ENCODE measurements at regions of chr16 and their contacts with region 1.

Region 1: DNA sequence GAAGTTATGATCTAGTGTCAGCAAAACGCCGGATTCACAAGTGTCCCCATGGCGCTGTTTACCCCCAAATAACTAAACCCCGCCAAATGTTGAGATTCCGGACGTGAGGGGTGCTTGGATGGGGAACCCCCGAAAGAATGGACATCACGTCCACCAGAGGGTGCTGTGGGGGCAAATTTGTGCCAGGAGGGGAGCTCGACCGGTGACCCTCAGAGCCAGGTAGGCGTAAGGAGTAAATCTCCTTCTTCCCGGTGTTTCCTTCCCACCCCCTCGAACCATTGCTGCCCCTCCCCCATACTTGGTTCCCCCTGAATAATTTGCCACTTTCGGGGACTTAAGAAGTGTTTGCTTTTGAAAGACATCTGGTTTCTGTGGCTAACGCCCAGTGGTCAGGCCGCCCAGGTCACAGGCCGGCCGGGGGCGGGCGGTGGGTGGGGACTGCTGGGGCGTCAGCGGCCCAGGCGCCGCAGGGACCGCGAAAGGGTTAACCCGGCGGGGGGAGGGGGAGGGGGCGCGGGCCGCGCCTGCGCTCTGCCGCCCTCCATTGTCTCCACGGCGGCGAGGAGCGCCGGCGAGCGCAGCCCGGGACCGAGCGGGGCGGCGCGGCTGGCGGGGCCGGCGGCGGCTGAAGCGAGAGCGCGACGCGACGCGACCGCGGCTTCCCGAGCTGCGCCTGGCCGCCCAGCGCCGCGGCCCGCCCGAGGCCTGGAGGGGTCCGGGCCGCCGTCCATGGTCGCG is at the start of gene ZNRF1:
- DNase-seq: peak in 1 of 2 donors; percentile 90
- H3K4me3 ChIP-seq: peak within 1 kb of the TSS; percentile 96 to 97
- H3K27ac ChIP-seq: peak within 1 kb of the TSS; percentile 62 to 74
- H3K4me1 ChIP-seq: peaks cover 0 to 16% of the 10 kb centered on the region in 2 donors
- H3K27me3 ChIP-seq: no peaks in the 10 kb centered on the region
- CTCF ChIP-seq: peak; percentile 76 to 86 (median 77)
- total RNA-seq, gene ZNRF1: 53.7 TPM

Region 2: GRCh38 chr16:74936902-74937560 is 61.6 kb before region 1 on chr16:
- intact Hi-C with region 1: no loop called
- DNase-seq: no peak
- H3K4me3 ChIP-seq: no peak overlapping the region
- H3K27ac ChIP-seq: no peak overlapping the region
- H3K4me1 ChIP-seq: no peaks in the 10 kb centered on the region
- H3K27me3 ChIP-seq: no peaks in the 10 kb centered on the region
- CTCF ChIP-seq: no peak

Region 3: GRCh38 chr16:74984535-74985296 is 13.9 kb before region 1 on chr16 and contains the start of gene WDR59:
- intact Hi-C with region 1: loop called (anchors 1 kb)
- DNase-seq: peak; percentile 100
- H3K4me3 ChIP-seq: peak within 1 kb of the TSS; percentile 81 to 83
- H3K27ac ChIP-seq: peak within 1 kb of the TSS; percentile 58 to 73
- H3K4me1 ChIP-seq: peaks cover 0 to 9% of the 10 kb centered on the region in 2 donors
- H3K27me3 ChIP-seq: no peaks in the 10 kb centered on the region
- CTCF ChIP-seq: no peak
- total RNA-seq, gene WDR59: 22.0 TPM

Region 4: GRCh38 chr16:75011634-75012307 is 13.1 kb after region 1 on chr16:
- intact Hi-C with region 1: loop called (anchors 2 kb)
- DNase-seq: peak in 1 of 2 donors; percentile 81
- H3K4me3 ChIP-seq: peak overlapping the region in 1 of 2 donors; percentile 30
- H3K27ac ChIP-seq: peak overlapping the region; percentile 86 to 88
- H3K4me1 ChIP-seq: peaks cover 4 to 23% of the 10 kb centered on the region in 2 donors
- H3K27me3 ChIP-seq: no peaks in the 10 kb centered on the region
- CTCF ChIP-seq: no peak

Region 5: GRCh38 chr16:75025761-75026160 is 27.1 kb after region 1 on chr16:
- intact Hi-C with region 1: loop called (anchors 1 kb)
- DNase-seq: no peak
- H3K4me3 ChIP-seq: no peak overlapping the region
- H3K27ac ChIP-seq: peak overlapping the region; percentile 85 to 87
- H3K4me1 ChIP-seq: peaks cover 4 to 13% of the 10 kb centered on the region in 2 donors
- H3K27me3 ChIP-seq: no peaks in the 10 kb centered on the region
- CTCF ChIP-seq: no peak

Region 6: DNA sequence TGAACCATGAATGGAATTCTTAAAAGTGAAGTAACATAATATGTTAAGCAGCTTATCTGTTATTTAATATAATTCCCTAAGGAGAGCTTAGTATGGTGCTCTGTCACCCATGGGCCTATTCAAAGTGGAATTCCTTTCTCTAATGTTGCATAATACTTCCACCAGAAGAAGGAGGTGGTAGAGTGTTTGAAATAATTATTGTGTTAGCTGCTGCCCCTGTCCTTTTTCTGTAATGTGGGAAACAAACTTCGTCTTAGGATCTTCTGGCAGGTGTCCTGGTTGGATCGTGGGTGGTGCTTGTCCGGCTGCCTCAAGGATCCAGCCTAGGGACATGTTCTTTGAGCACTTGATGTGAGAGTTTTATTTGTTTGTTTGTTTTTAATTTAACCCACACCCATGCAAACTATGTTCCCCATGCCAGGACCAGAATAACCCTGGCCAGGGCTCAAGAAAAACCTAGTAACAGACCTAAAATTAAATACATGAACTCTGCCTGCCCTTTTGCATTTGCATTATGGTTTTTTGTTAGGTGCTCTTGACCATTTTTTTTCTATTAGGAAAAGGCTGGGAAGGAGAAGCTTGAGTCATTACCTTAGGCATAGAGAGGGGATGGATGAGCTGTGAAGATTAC is 46.3 kb after region 1 on chr16:
- intact Hi-C with region 1: loop called (anchors 2 kb)
- DNase-seq: peak in 1 of 2 donors; percentile 85
- H3K4me3 ChIP-seq: no peak overlapping the region
- H3K27ac ChIP-seq: peak overlapping the region; percentile 54 to 72
- H3K4me1 ChIP-seq: peaks cover 13 to 31% of the 10 kb centered on the region in 2 donors
- H3K27me3 ChIP-seq: no peaks in the 10 kb centered on the region
- CTCF ChIP-seq: no peak

Region 7: DNA sequence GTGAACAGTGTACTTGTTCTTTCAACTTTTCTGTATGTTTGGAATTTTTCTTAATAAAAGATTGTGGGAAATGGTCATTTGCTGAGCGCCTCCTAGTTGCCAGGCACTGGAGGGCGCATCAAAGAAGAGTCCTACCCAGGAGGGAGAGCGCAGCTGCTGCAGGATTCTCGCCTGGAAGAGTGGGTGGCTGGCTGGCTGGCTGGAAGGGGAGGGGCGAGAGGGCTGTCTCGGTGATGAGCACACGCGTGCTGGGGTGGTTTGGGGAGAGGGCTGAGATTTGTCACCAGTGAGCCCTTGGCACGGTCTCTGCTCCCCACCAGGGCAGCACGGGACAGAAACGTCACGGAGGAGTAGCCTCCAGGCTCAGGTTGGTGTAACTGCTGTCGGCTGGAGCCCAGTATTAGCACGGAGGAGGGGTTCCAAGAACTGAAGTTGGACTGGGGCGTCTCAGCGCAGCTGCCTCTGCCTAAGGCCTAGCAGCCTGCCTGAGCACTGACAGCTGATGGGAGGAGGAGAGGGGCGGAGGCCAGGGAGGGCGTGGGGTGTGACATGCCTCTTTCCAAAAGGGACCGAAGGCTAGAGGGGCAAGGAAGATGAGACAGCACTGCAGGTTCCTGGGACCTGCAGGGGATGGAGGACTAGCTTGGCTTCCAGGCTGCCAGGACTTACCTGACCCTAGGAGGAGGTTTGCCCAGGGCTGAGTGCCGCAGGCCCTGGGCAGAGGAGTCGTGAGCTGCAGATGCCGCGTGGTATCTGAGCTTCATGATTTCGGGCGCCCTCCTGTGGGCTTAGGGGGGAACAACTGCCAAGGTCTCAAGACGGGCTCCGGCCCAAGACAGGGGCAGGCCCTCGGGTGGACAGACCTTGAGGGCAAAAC is 112.2 kb after region 1 on chr16:
- intact Hi-C with region 1: loop called (anchors 1 kb)
- DNase-seq: peak; percentile 69 to 95
- H3K4me3 ChIP-seq: peak overlapping the region in 1 of 2 donors; percentile 47
- H3K27ac ChIP-seq: peak overlapping the region; percentile 72 to 83
- H3K4me1 ChIP-seq: peaks cover 8 to 39% of the 10 kb centered on the region in 2 donors
- H3K27me3 ChIP-seq: no peaks in the 10 kb centered on the region
- CTCF ChIP-seq: peak; percentile 88 to 91 (median 90)